Caco-2 (cell line): ENCODE measurements at regions of chr11 and their contacts with region 1.

Region 1: DNA sequence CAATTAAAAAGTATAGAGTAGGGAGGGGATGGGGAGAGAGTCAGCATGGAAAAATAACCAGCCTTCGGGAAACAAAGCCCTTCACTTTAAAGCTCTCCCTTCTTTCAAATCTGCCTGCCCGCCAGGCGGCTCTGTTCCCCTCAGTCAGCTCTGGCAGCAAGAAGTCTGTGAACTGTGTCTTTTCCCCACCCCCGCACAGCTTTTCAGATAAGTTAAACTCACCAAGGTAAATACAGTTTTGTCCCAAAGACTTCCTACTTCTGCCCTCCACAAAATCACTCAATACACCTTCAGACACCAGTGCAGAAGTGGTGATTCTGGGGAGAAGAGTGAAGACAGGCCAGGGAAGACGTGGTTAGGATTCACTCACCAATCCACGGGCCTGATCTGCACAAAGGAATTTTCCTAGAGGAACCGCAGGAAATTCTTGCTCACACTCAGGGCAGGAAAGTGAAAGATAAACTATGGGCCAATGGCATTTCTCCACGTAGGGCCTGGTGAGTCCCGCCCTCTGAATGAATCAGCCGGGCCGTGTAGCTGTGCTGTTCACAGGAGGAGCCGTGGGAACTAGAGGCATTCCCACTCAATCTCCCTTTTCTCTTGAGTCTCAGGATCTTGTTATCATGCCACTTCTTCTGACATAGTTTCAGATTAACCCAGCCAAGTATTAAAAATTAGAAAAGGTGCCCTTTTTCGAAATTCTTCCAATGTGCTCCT is at the start of gene TRIM5:
- DNase-seq: peak; percentile 90 to 91
- H3K4me3 ChIP-seq: peak within 1 kb of the TSS; percentile 35
- H3K4me3 Mint-ChIP-seq: peak within 1 kb of the TSS; percentile 85
- H3K27ac Mint-ChIP-seq: peak within 1 kb of the TSS; percentile 95
- H3K4me1 ChIP-seq: peaks cover 11% of the 10 kb centered on the region; the same call in 1 of the 2 replicates
- H3K4me1 Mint-ChIP-seq: peaks cover 19% of the 10 kb centered on the region
- H3K27me3 ChIP-seq: no peaks in the 10 kb centered on the region
- H3K27me3 Mint-ChIP-seq: no peaks in the 10 kb centered on the region
- CTCF ChIP-seq: peak; percentile 56 to 83
- total RNA-seq, gene TRIM5: 21.9 and 25.2 TPM in 2 replicates

Region 2: GRCh38 chr11:5620646-5621521 is 63.9 kb before region 1 on chr11:
- CTCF ChIA-PET with region 1: interaction called, 12 read pairs
- POLR2A ChIA-PET with region 1: interaction called, 6 read pairs
- intact Hi-C with region 1: loop called (anchors 1 kb)
- DNase-seq: peak; percentile 72 to 78
- H3K4me3 ChIP-seq: no peak overlapping the region
- H3K4me3 Mint-ChIP-seq: peak overlapping the region; percentile 70
- H3K27ac Mint-ChIP-seq: peak overlapping the region; percentile 97
- H3K4me1 ChIP-seq: peaks cover 66% of the 10 kb centered on the region
- H3K4me1 Mint-ChIP-seq: peaks cover 41% of the 10 kb centered on the region
- H3K27me3 ChIP-seq: no peaks in the 10 kb centered on the region
- H3K27me3 Mint-ChIP-seq: no peaks in the 10 kb centered on the region
- CTCF ChIP-seq: no peak

Region 3: GRCh38 chr11:5808500-5809121 is 123.8 kb after region 1 on chr11 and contains the start of gene OR52N2:
- CTCF ChIA-PET with region 1: interaction called, 5 read pairs
- POLR2A ChIA-PET with region 1: no interaction called
- intact Hi-C with region 1: loop called (anchors 1 kb)
- DNase-seq: peak; percentile 71 to 80
- H3K4me3 ChIP-seq: peak within 1 kb of the TSS; percentile 26
- H3K4me3 Mint-ChIP-seq: peak within 1 kb of the TSS; percentile 61
- H3K27ac Mint-ChIP-seq: no peak within 1 kb of the TSS
- H3K4me1 ChIP-seq: no peaks in the 10 kb centered on the region; the same call in 1 of the 2 replicates
- H3K4me1 Mint-ChIP-seq: peaks cover 6% of the 10 kb centered on the region
- H3K27me3 ChIP-seq: no peaks in the 10 kb centered on the region
- H3K27me3 Mint-ChIP-seq: peaks cover 16% of the 10 kb centered on the region
- CTCF ChIP-seq: peak; percentile 86 to 94
- total RNA-seq, gene OR52N2: not detected in 2 replicates